Psoas muscle (tissue), 8 donors: ENCODE measurements at regions of chr3 and their contacts with region 1.

Region 1: DNA sequence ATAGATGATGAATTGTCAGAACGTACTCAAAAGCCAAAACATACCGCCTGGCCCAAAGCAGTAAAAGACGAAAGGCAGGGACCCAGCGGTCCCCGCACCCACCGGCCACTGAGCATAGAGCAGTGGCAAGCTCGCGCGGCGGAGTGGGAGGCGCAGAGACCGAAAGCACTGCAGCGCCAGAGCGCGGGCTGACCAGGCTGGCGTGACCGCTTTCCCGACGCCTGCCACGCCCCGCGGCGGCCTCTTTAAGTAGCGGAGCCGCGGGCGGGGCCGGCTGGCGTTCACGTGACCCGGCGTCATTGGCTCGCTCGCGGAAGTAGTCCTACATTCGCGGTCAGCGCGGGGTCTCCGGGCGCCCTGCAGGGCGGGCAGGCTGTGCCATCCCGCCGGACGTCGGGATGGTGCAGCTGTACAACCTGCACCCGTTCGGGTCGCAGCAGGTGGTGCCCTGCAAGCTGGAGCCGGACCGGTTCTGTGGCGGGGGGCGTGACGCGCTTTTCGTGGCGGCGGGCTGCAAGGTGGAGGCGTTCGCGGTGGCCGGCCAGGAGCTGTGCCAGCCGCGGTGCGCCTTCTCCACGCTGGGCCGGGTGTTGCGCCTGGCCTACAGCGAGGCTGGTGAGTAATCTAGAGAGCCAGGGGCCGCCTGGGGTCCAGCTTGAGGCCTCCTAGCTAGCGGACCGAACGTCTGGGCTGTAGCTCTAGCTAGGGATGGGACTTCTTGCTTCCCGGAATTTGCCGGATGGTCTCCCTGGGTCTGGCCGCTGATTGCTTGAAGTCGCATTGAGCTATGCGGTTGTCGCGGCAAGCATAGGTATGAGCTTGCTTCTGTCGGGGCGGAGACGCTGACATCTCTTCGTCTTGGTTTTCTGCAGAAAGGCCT is at the start of gene HPS3:
- DNase-seq: peak; percentile 93 to 95
- ATAC-seq: peak; percentile 98 to 99 (median 99)
- H3K4me3 ChIP-seq: peak within 1 kb of the TSS; percentile 82
- H3K27ac ChIP-seq: peak within 1 kb of the TSS; percentile 79
- H3K4me1 ChIP-seq: peaks cover 27% of the 10 kb centered on the region
- H3K27me3 ChIP-seq: no peaks in the 10 kb centered on the region
- CTCF ChIP-seq: no peak
- total RNA-seq, gene HPS3: 2.6 to 5.4 (median 3.4) TPM

Region 2: DNA sequence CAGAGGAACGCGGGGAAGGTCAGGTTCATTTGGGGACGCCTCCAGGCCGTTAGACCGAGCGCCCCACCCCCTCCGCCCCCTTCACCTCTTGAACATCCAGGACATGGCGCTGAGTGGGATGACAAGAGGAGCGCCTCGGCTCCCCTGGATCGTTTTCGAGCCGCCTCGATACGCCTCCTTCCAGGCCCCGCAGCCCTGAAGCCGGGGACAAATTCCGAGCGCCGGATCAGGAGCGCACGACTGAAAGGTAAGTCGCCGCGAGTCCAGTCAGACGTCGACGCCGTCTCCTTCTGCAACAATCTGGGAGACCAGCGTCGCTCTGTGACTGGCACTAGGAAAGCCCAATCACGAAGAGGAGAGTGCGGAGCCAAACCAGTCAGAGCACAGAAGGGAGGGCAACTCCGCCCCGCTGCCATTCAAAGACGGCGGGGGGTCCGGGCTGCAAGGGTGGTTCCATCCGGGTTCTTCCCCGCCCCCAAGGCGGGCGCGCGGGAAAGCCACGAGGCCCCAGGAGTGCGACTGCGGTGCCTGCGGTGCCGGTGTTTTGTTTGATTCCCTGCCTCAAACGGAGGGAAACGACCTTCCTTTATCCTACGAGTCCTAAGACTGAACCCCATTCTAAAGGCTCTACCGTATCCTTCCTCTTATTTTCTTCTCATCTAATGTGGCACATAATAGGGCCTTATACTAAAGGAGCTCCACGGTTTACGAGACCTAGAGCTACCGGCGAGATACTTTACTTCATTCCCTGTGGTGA is 43.2 kb before region 1 on chr3 and contains the start of gene HLTF:
- intact Hi-C with region 1: loop called in 1 of 2 experiments (anchors 2 kb)
- DNase-seq: peak; percentile 94
- ATAC-seq: peak; percentile 99 to 100 (median 99)
- H3K4me3 ChIP-seq: peak within 1 kb of the TSS; percentile 80
- H3K27ac ChIP-seq: peak within 1 kb of the TSS; percentile 56
- H3K4me1 ChIP-seq: peaks cover 7% of the 10 kb centered on the region
- H3K27me3 ChIP-seq: no peaks in the 10 kb centered on the region
- CTCF ChIP-seq: no peak
- total RNA-seq, gene HLTF: 5.0 to 10.1 (median 8.9) TPM

Region 3: GRCh38 chr3:149174901-149175300 is 45.3 kb after region 1 on chr3:
- intact Hi-C with region 1: loop called in 1 of 2 experiments (anchors 5 kb)
- DNase-seq: no peak
- ATAC-seq: no peak
- H3K4me3 ChIP-seq: no peak overlapping the region
- H3K27ac ChIP-seq: no peak overlapping the region
- H3K4me1 ChIP-seq: peaks cover 3% of the 10 kb centered on the region
- H3K27me3 ChIP-seq: no peaks in the 10 kb centered on the region
- CTCF ChIP-seq: no peak

Region 4: DNA sequence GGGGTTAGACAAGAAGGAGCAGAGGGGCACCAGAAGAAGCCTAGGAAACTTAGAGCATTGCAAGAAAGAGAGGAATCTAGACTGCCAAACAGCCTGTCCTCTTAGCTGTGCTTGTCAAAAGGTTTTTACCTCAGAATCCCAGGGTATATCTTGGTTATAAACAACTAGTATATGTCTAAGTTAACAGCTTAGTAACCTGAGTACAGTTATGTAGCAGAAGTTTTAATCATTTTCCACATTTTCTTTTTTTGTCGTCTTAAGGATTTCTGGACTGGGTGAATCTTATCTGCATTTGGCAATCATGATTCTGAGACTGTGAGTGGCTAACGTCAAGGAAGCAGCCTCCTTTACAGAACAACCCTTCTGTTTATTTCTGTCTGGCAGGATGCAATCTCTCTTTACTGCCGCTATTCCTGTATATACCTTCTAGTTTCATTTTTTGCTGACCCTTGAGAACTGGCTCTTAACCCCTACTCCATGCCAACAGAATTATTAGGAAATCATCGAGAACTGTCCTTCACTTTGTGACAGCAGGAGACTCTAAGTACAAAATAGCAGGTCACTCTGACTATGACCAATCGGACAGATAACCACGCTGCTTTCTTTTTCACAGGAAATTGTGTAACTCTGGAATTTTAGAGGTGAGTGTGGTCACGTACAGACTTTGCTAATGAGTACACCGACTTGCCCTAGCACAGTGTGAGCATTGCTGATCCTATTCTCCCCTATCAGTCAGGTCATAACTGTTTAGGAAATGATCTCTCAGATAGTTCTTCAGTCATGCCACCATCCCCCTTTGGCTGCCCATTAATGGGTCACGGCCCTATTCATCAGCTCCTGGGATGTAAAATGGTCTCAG is 95.4 kb after region 1 on chr3:
- intact Hi-C with region 1: no loop called
- DNase-seq: no peak
- ATAC-seq: peak; percentile 87 to 95 (median 92)
- H3K4me3 ChIP-seq: peak overlapping the region; percentile 56
- H3K27ac ChIP-seq: peak overlapping the region; percentile 79
- H3K4me1 ChIP-seq: peaks cover 4% of the 10 kb centered on the region
- H3K27me3 ChIP-seq: no peaks in the 10 kb centered on the region
- CTCF ChIP-seq: no peak

Region 5: GRCh38 chr3:149536429-149536828 is 406.9 kb after region 1 on chr3:
- intact Hi-C with region 1: no loop called
- DNase-seq: peak; percentile 50 to 74
- ATAC-seq: peak; percentile 47 to 83 (median 68)
- H3K4me3 ChIP-seq: peak overlapping the region; percentile 46
- H3K27ac ChIP-seq: peak overlapping the region; percentile 52
- H3K4me1 ChIP-seq: peaks cover 36% of the 10 kb centered on the region
- H3K27me3 ChIP-seq: no peaks in the 10 kb centered on the region
- CTCF ChIP-seq: no peak